T-cell (primary cell): ENCODE measurements at regions of chr14 and their contacts with region 1.

Region 1: GRCh38 chr14:35814371-35815005 is 5.4 kb upstream of the RALGAPA1 start:
- DNase-seq: peak; percentile 34 to 88 (median 71)
- ATAC-seq: peak; percentile 83 to 89 (median 86)
- H3K4me3 ChIP-seq: no peak overlapping the region
- H3K4me3 Mint-ChIP-seq: no peak overlapping the region
- H3K27ac ChIP-seq: no peak overlapping the region
- H3K27ac Mint-ChIP-seq: no peak overlapping the region
- H3K4me1 ChIP-seq: peaks cover 0 to 1% of the 10 kb centered on the region in 2 experiments
- H3K4me1 Mint-ChIP-seq: peaks cover 2 to 7% (median 7%) of the 10 kb centered on the region in 3 donors
- H3K27me3 ChIP-seq: peaks cover 0 to 2% of the 10 kb centered on the region in 2 experiments
- H3K27me3 Mint-ChIP-seq: no peaks in the 10 kb centered on the region

Region 2: DNA sequence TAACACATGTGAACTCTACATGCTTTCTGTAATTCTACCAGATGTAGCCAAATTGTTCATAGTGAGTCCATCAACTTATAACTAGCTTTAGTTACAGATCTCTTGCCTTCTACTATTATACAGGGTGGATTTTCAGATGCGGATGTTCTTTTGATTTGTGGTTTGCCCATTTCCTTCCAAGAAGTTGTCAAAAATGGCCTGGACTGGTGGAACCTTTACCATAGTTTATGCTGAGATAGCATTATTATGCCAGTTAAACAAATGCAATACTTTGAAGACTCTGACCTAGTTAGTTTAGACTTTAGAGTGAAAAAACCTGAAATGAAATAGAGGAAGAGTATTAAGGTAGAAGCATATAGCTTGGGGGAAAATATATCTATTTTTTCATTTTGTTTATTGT is 1072.6 kb before region 1 on chr14:
- CTCF ChIA-PET with region 1: interaction called in 1 of 2 experiments, 10 read pairs
- POLR2A ChIA-PET with region 1: no interaction called
- DNase-seq: peak in 3 of 35 experiments; percentile 2 to 36 (median 2)
- ATAC-seq: peak in 3 of 4 experiments; percentile 57 to 73 (median 63)
- H3K4me3 ChIP-seq: no peak overlapping the region
- H3K4me3 Mint-ChIP-seq: peak overlapping the region in 1 of 3 donors; percentile 38
- H3K27ac ChIP-seq: peak overlapping the region; percentile 54
- H3K27ac Mint-ChIP-seq: peak overlapping the region; percentile 65 to 78
- H3K4me1 ChIP-seq: peaks cover 0 to 14% of the 10 kb centered on the region in 2 experiments
- H3K4me1 Mint-ChIP-seq: peaks cover 16 to 44% (median 18%) of the 10 kb centered on the region in 3 donors
- H3K27me3 ChIP-seq: no peaks in the 10 kb centered on the region
- H3K27me3 Mint-ChIP-seq: no peaks in the 10 kb centered on the region

Region 3: GRCh38 chr14:35826218-35826951 is 11.9 kb after region 1 on chr14 and contains the start of gene BRMS1L:
- CTCF ChIA-PET with region 1: interaction called, 3 to 21 read pairs
- POLR2A ChIA-PET with region 1: interaction called in 1 of 2 experiments, 33 read pairs
- DNase-seq: peak; percentile 88 to 98 (median 96)
- ATAC-seq: peak; percentile 97 to 100 (median 98)
- H3K4me3 ChIP-seq: peak within 1 kb of the TSS; percentile 83 to 97
- H3K4me3 Mint-ChIP-seq: peak within 1 kb of the TSS; percentile 88 to 93 (median 88)
- H3K27ac ChIP-seq: peak within 1 kb of the TSS; percentile 88
- H3K27ac Mint-ChIP-seq: peak within 1 kb of the TSS; percentile 81 to 92
- H3K4me1 ChIP-seq: peaks cover 9 to 12% of the 10 kb centered on the region in 2 experiments
- H3K4me1 Mint-ChIP-seq: peaks cover 16 to 28% (median 23%) of the 10 kb centered on the region in 3 donors
- H3K27me3 ChIP-seq: no peaks in the 10 kb centered on the region
- H3K27me3 Mint-ChIP-seq: no peaks in the 10 kb centered on the region
- total RNA-seq, gene BRMS1L: 3.9 to 7.7 (median 5.4) TPM